A549 (cell line): ENCODE measurements at regions of chr17 and their contacts with region 1.

Region 1: GRCh38 chr17:10327640-10328039 is 45.2 kb downstream of the MYH13 start:
- DNase-seq: peak; percentile 87 to 89
- ATAC-seq: peak; percentile 71 to 95
- H3K4me3 ChIP-seq: no peak overlapping the region
- H3K27ac ChIP-seq: no peak overlapping the region
- H3K4me1 ChIP-seq: peaks cover 4% of the 10 kb centered on the region; the same call in 1 of the 3 replicates
- CTCF ChIP-seq: peak; percentile 93
- EP300 ChIP-seq: no peak
- POLR2A ChIP-seq: no peak
- RAD21 ChIP-seq: peak; percentile 90 to 95

Region 2: DNA sequence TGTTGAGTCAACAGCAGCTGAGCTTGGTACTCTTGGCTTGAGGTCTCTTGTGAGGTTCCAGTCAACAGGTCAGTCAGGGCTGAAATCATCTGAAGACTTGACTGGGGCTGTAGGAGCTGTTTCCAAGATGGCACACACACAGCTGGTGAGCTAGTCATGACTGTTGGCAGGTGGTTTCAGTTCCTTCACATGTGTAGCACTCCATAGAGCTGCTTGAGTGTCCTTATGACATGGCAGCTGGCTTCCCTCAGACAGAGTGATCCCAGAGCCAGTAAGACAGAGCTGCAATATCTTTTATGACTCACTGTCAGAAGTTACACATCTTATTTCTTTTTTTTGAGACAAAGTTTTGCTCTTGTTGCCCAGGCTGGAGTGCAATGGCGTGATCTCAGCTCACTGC is 109.7 kb before region 1 on chr17:
- CTCF ChIA-PET with region 1: no interaction called
- POLR2A ChIA-PET with region 1: no interaction called
- DNase-seq: no peak
- ATAC-seq: peak in 1 of 2 experiments; percentile 68; a peak in 1 of 6 replicates
- H3K4me3 ChIP-seq: no peak overlapping the region
- H3K27ac ChIP-seq: no peak overlapping the region
- H3K4me1 ChIP-seq: no peaks in the 10 kb centered on the region
- CTCF ChIP-seq: no peak
- EP300 ChIP-seq: no peak
- POLR2A ChIP-seq: no peak
- RAD21 ChIP-seq: no peak

Region 3: DNA sequence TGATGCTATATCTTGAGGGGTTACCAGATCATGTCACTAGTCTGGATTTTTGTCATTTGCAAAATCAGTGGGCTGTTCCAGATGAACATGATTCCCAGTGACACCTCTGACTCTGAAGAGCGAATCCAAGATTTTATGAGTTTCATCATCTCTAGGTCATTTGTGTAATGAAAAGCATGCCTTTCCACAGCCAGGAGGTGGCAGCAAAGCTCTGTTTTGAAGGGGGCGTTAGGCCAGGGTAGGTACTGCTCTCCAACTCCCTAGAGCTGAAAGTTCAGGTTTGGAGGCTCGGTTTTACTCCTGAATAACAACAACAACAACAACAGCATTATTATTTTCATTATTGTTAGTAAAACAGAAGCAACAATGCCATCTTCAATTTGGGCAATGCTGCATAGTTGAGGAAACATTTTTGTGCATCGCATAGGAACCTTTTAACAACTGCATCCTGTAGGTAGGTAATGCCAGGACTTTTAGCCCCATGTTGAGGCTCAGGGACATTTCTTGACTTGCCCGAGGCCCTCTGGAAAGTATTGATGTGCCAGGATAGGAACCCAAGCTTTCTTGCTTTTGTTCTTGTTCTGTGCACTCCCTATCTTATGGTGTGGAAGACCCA is 31.8 kb before region 1 on chr17:
- CTCF ChIA-PET with region 1: interaction called, 16 read pairs
- POLR2A ChIA-PET with region 1: no interaction called
- DNase-seq: peak; percentile 69 to 70
- ATAC-seq: peak; percentile 83 to 96
- H3K4me3 ChIP-seq: no peak overlapping the region
- H3K27ac ChIP-seq: no peak overlapping the region
- H3K4me1 ChIP-seq: no peaks in the 10 kb centered on the region
- CTCF ChIP-seq: peak; percentile 62
- EP300 ChIP-seq: no peak
- POLR2A ChIP-seq: no peak
- RAD21 ChIP-seq: peak; percentile 65 to 78; a peak in 4 of 5 replicates

Region 4: DNA sequence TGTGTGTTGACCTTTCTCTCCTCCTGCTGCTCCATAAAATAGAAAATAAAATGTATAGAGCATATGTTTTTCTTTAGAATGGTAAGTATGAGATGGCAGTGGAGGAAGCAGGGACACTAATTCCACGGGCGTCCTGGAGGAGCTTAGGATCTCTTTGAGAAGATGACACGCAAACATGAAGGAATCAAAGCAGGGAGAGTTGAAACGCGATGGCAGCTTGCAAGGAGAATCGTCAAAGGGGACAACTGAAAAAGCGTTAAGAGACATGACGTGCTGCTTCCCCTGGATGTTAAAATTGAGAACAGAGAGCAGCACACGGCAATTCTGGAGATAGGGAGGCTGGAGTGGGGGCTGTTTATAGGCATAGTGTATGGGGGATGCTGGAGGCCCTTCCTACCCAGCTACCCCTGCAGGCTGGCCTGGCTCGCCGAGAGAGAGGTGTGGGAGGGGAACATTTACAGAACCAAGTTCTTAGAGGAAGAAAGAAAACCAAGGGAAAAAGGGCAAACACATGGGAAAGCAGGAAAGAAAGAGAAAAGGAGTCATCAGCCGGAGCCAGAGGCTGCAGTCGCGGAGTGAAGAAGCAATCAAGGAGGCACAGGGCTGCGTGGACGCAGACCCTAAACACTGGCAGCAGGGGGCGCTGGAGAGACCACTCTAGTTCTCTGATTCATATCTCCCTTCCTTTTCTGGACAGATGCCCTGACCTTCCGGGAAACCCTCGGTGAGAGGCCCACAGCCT is 10.7 kb before region 1 on chr17:
- CTCF ChIA-PET with region 1: interaction called, 29 read pairs
- POLR2A ChIA-PET with region 1: no interaction called
- DNase-seq: peak; percentile 50 to 69
- ATAC-seq: peak; percentile 72 to 91; a peak in 5 of 6 replicates
- H3K4me3 ChIP-seq: no peak overlapping the region
- H3K27ac ChIP-seq: no peak overlapping the region
- H3K4me1 ChIP-seq: no peaks in the 10 kb centered on the region
- CTCF ChIP-seq: peak; percentile 53
- EP300 ChIP-seq: no peak
- POLR2A ChIP-seq: no peak
- RAD21 ChIP-seq: peak in 1 of 2 experiments; percentile 34; a peak in 2 of 5 replicates

Region 5: GRCh38 chr17:10337976-10338375 is 10.3 kb after region 1 on chr17:
- CTCF ChIA-PET with region 1: interaction called, 38 read pairs
- POLR2A ChIA-PET with region 1: no interaction called
- DNase-seq: no peak
- ATAC-seq: no peak
- H3K4me3 ChIP-seq: no peak overlapping the region
- H3K27ac ChIP-seq: no peak overlapping the region
- H3K4me1 ChIP-seq: no peaks in the 10 kb centered on the region
- CTCF ChIP-seq: no peak
- EP300 ChIP-seq: no peak
- POLR2A ChIP-seq: no peak
- RAD21 ChIP-seq: no peak

Region 6: GRCh38 chr17:10354651-10355050 is 27.0 kb after region 1 on chr17:
- CTCF ChIA-PET with region 1: interaction called, 12 read pairs
- POLR2A ChIA-PET with region 1: no interaction called
- DNase-seq: no peak
- ATAC-seq: no peak
- H3K4me3 ChIP-seq: no peak overlapping the region
- H3K27ac ChIP-seq: no peak overlapping the region
- H3K4me1 ChIP-seq: no peaks in the 10 kb centered on the region
- CTCF ChIP-seq: no peak
- EP300 ChIP-seq: no peak
- POLR2A ChIP-seq: no peak
- RAD21 ChIP-seq: no peak

Region 7: DNA sequence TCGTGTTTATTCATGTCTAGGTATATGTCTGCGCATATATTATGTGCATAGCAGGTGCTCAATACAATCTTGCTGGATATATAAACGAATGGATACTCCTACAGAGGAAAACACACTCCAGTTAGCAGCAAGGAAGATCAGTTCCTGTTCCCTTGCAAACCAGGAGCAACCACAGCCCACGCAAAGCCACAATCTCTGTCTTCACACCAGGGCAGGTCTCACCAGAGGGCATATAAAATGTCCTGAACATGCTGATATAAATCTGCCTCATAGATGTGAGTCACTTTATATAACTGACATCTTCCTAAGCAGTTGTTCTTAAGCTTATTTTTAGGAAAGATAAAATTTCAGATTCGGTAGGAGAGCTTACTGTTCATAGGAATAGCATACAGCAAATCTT is 611.7 kb after region 1 on chr17:
- CTCF ChIA-PET with region 1: no interaction called
- POLR2A ChIA-PET with region 1: no interaction called
- DNase-seq: no peak
- ATAC-seq: no peak
- H3K4me3 ChIP-seq: no peak overlapping the region
- H3K27ac ChIP-seq: no peak overlapping the region
- H3K4me1 ChIP-seq: no peaks in the 10 kb centered on the region
- CTCF ChIP-seq: no peak
- EP300 ChIP-seq: no peak
- POLR2A ChIP-seq: no peak
- RAD21 ChIP-seq: no peak